Heart right ventricle (tissue), 16 donors: ENCODE measurements at regions of chr7 and their contacts with region 1.

Region 1: DNA sequence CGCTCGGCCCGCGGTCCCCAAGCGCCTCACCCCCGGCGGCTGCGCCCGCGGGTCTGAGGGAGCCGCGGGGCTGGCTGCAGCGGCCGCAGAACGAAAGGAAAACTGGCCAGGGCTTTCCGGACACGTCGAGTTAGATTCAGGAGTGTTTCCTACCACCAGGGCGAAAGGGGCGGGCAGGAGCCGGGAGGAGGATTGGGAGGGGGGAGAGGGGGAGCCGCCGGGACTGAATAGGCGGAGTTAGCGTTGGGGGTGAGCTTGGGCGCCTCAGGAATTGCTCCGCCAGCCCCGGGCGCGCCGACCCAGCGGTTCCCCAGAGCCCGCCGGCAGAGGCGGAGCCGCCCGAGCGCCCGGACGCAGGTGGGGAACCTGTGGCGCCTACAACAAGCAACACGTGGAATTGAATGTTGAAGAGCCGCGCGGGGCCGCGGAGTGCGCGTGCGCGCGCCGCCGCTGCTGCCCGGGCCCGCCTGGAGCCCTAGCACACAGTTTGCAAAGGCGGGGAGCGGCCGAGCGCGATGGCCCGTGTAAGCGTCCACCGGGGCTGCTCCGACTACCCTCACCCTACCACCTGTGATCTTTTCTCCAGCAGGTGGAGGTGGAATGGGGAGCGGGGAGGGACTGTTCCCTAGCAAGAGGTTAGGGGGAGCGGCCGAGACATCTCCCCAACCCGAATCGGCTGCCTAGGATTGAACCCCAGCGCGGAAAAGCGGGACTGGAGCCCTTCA is at the start of gene CADPS2:
- DNase-seq: peak; percentile 84 to 90
- ATAC-seq: peak; percentile 91 to 95 (median 94)
- H3K4me3 ChIP-seq: peak within 1 kb of the TSS; percentile 57 to 88 (median 80)
- H3K27ac ChIP-seq: peak within 1 kb of the TSS; percentile 86 to 95 (median 90)
- H3K4me1 ChIP-seq: peaks cover 0 to 38% (median 5%) of the 10 kb centered on the region in 9 donors
- H3K27me3 ChIP-seq: peaks cover 0 to 44% (median 0%) of the 10 kb centered on the region in 7 donors
- CTCF ChIP-seq: peak in 6 of 9 donors; percentile 6 to 40 (median 28)
- total RNA-seq, gene CADPS2: 3.6 to 25.7 (median 6.1) TPM

Region 2: GRCh38 chr7:122689346-122690109 is 197.0 kb before region 1 on chr7:
- intact Hi-C with region 1: loop called in 1 of 10 experiments (anchors 10 kb)
- DNase-seq: no peak
- ATAC-seq: no peak
- H3K4me3 ChIP-seq: no peak overlapping the region
- H3K27ac ChIP-seq: no peak overlapping the region
- H3K4me1 ChIP-seq: no peaks in the 10 kb centered on the region
- H3K27me3 ChIP-seq: no peaks in the 10 kb centered on the region
- CTCF ChIP-seq: no peak

Region 3: DNA sequence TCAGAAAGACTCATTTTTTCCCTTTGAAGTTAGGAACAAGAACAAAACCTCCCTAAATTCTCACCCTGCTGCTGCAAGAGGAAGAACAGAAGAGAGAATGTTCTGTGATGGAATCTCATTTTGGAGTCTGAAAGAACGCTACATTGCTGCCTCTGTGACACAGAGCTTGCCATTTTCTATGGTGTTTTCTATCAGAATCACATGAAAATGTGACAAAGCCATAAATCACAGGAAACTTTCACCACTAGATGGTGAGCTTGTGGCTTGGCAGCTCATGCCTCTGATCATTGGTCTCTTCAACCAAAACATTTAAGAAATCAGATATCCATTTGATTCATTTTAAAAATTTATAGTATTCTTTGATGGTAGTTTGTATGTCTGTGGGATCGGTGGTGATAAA is 83.2 kb before region 1 on chr7:
- intact Hi-C with region 1: loop called in 5 of 10 experiments (anchors 2 to 5 kb)
- DNase-seq: peak in 1 of 2 donors; percentile 16
- ATAC-seq: peak in 6 of 8 donors; percentile 25 to 76 (median 58)
- H3K4me3 ChIP-seq: no peak overlapping the region
- H3K27ac ChIP-seq: peak overlapping the region in 8 of 10 donors; percentile 43 to 76 (median 73)
- H3K4me1 ChIP-seq: peaks cover 0 to 32% (median 18%) of the 10 kb centered on the region in 9 donors
- H3K27me3 ChIP-seq: no peaks in the 10 kb centered on the region
- CTCF ChIP-seq: peak; percentile 25 to 76 (median 52)

Region 4: GRCh38 chr7:122965306-122965705 is 78.8 kb after region 1 on chr7:
- intact Hi-C with region 1: no loop called
- DNase-seq: no peak
- ATAC-seq: no peak
- H3K4me3 ChIP-seq: no peak overlapping the region
- H3K27ac ChIP-seq: no peak overlapping the region
- H3K4me1 ChIP-seq: no peaks in the 10 kb centered on the region
- H3K27me3 ChIP-seq: no peaks in the 10 kb centered on the region
- CTCF ChIP-seq: no peak

Region 5: DNA sequence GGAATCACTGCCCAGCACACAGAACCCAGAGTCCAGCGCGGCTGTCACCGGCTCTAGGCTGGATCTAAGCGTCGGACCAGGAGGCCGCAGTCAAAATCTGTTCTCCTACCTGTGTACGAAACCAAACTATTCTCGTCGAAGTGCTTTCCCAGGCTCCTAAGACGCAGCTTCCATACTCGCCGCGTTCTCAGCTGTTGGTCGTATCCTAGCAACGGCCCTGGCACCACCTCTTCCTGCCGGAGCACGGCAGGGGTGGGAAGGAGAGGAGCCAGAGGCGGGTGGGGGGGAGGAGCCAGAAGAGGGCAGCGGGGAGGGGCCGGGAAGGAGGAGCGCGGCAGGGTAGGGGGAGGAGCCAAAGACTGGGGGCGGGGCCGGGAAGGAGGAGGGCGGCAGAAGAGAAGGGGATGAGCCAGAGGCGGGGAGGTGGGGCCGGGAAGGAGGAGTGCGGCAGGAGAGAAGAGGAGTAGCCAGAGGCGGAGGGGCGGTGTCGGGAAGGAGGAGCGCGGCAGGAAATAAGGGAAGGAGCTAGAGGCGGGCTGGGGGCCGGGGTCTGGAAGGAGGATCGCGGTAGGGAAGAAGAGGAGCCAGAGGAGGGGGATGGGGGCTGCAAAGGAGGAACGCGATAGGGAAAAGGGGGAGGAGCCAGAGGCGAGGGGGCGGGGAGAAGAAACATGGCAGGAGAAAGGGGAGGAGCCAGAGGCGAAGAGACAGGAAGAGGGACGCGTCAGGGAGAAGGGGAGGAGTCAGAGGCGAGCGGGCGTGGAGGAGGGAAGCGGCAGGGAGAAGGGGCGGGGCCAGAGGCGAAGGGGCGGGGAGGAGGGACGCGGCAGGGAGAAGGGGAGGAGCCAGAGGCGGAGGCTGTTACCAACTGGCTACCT is 648.1 kb after region 1 on chr7 and contains the start of gene IQUB:
- intact Hi-C with region 1: loop called in 1 of 10 experiments (anchors 10 kb)
- DNase-seq: peak; percentile 99
- ATAC-seq: peak; percentile 95 to 99 (median 96)
- H3K4me3 ChIP-seq: peak within 1 kb of the TSS; percentile 37 to 76 (median 64)
- H3K27ac ChIP-seq: peak within 1 kb of the TSS in 9 of 10 donors; percentile 65 to 90 (median 82)
- H3K4me1 ChIP-seq: peaks cover 0 to 31% (median 20%) of the 10 kb centered on the region in 9 donors
- H3K27me3 ChIP-seq: peaks cover 0 to 45% (median 0%) of the 10 kb centered on the region in 7 donors
- CTCF ChIP-seq: no peak
- total RNA-seq, gene IQUB: 0.17 to 0.83 (median 0.53) TPM